MCF 10A (cell line): ENCODE measurements at regions of chr1 and their contacts with region 1.

Region 1: DNA sequence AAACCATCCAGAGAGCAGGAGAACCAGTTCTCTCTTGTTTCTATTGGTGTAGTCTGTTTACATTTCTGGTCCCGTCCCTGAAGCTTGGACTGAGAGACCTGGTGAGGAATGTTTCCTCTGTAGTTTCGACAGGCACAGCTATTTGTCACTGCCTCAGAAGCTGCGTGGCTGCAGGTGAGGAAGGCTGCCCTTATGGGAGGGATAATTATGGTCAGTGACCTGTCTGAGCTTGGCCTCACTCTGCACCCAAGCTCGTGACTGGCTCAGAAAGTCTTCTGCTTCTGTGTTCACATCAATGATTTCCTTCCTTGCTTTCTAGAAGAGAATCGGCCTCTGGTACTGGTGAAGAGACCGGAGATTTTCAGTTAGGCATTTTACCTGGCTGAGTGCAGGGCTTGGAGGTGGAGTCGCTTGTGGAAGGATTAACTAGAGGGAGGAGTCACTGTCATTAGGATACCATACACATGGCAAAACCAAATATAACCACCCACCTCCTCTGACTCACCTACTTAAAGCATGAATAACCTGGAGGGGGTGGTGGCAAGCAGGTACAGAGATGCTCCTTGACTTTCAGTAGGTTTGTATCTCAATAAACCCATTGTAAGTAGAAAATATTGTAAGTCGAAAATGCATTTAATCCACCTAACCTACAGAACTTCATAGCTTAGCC is 19.9 kb upstream of the WDR26 start:
- DNase-seq: peak; percentile 95
- H3K4me3 Mint-ChIP-seq: peak overlapping the region; percentile 46
- H3K27ac Mint-ChIP-seq: peak overlapping the region; percentile 68
- H3K4me1 Mint-ChIP-seq: peaks cover 51% of the 10 kb centered on the region
- H3K27me3 Mint-ChIP-seq: no peaks in the 10 kb centered on the region
- CTCF ChIP-seq: no peak

Region 2: GRCh38 chr1:224113918-224114786 is 340.4 kb before region 1 on chr1 and contains the start of gene FBXO28:
- CTCF ChIA-PET with region 1: interaction called, 23 read pairs
- POLR2A ChIA-PET with region 1: interaction called, 6 read pairs
- intact Hi-C with region 1: loop called (anchors 1 kb)
- DNase-seq: peak; percentile 99
- H3K4me3 Mint-ChIP-seq: peak within 1 kb of the TSS; percentile 90
- H3K27ac Mint-ChIP-seq: peak within 1 kb of the TSS; percentile 82
- H3K4me1 Mint-ChIP-seq: peaks cover 8% of the 10 kb centered on the region
- H3K27me3 Mint-ChIP-seq: no peaks in the 10 kb centered on the region
- CTCF ChIP-seq: no peak
- total RNA-seq, gene FBXO28: 97.6 and 110 TPM in 2 replicates

Region 3: DNA sequence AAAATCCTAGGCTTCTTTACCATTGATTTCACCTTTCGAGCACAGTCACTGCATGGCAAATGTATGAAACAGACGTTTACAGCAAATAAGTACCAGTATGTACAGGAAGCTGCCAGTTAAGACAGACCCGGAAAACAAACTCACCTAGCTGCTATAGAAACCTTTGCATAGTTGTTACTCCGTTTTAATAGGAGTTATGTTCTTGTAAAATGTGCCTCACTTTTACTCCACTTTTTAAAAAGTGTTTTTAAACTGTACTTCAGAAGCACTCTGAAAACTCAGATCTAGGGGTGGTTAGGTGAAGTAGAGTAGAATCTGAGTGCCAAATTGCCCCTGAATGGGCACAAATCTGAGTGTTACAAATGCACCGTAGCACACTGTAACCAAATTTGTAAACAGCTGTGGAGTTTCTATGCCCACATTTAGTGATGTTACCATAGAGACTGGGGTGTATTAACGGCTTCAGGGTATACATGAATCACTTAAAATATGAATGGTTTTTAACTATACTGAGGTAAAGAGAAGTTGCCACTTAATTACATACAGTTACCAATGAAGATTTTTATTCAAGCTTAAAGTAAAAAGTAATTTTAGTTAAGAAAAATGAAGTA is 67.1 kb before region 1 on chr1:
- CTCF ChIA-PET with region 1: interaction called, 41 read pairs
- POLR2A ChIA-PET with region 1: interaction called, 6 read pairs
- intact Hi-C with region 1: loop called (anchors 5 kb)
- DNase-seq: no peak
- H3K4me3 Mint-ChIP-seq: no peak overlapping the region
- H3K27ac Mint-ChIP-seq: no peak overlapping the region
- H3K4me1 Mint-ChIP-seq: no peaks in the 10 kb centered on the region
- H3K27me3 Mint-ChIP-seq: no peaks in the 10 kb centered on the region
- CTCF ChIP-seq: no peak

Region 4: DNA sequence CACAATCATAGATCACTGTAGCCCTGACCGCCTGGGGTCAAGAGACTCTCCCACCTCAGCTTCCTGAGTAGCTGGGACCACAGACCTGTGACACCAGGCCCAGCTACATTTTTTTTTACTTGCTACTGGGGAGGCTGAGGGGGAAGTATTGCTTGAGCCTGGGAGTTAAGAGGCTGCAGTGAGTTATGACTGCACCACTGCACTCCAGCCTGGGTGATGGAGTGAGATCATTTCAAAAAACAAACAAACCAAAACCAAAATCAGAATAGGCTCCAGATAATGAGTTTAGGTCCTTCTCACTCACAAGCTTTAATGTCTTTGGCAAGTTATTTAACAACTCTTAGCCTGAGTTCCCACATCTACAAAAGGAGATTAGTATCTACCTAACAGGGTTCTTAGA is 42.8 kb before region 1 on chr1:
- CTCF ChIA-PET with region 1: interaction called, 41 read pairs
- POLR2A ChIA-PET with region 1: interaction called, 28 read pairs
- intact Hi-C with region 1: loop called (anchors 2 kb)
- DNase-seq: no peak
- H3K4me3 Mint-ChIP-seq: no peak overlapping the region
- H3K27ac Mint-ChIP-seq: peak overlapping the region; percentile 47
- H3K4me1 Mint-ChIP-seq: peaks cover 11% of the 10 kb centered on the region
- H3K27me3 Mint-ChIP-seq: no peaks in the 10 kb centered on the region
- CTCF ChIP-seq: no peak

Region 5: DNA sequence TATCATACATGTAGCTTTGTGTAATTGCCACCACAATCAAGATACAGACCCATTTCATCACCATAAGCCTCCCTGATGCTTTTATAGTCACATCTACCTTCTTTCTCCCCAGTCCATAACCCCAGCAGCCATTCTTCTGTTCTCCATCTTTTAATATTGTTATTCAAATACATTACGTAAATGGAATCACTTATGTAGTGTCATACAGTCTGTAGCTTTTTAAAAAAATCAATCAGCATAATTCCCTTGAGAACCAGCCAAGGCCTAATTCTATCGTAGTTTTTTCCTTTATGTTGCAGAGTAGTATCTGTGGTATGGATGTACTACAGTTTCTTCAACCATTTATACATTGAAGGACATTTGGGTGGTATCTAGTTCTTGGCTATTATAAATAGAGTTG is 11.6 kb after region 1 on chr1:
- CTCF ChIA-PET with region 1: interaction called, 38 read pairs
- POLR2A ChIA-PET with region 1: interaction called, 5 read pairs
- intact Hi-C with region 1: no loop called
- DNase-seq: no peak
- H3K4me3 Mint-ChIP-seq: no peak overlapping the region
- H3K27ac Mint-ChIP-seq: no peak overlapping the region
- H3K4me1 Mint-ChIP-seq: no peaks in the 10 kb centered on the region
- H3K27me3 Mint-ChIP-seq: no peaks in the 10 kb centered on the region
- CTCF ChIP-seq: no peak

Region 6: DNA sequence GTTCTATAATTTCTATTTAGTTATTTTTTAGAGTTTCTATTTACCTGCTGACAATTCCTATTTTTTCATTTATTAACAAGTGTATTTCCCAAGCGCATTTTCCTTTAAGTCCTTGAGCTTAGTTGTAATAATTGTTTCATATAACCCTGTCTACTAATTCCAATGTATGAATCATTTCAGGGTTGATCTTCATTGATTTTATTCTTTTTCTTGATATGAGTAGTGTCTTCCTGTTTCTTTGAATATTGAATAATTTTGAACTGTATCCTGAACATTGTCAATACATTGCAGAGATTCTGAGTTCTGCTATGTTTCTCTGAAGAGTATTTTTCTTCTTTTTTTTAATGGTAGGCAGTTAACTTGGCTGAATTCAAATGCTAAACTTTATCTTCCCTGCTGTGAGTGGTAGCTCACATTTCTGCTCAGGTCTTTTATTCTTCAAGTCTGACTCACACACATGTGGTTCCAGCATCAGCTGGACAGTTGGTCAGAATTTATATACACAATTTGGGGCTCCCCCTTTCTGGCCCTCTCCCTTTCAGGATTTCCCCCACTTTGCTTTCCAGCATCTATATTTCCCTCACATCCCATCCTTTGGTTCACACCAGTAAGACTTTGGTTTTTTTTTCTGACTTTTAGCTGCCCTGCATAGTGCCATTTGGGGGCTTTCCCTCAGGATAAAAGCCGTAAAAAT is 34.4 kb after region 1 on chr1:
- CTCF ChIA-PET with region 1: interaction called, 18 read pairs
- POLR2A ChIA-PET with region 1: interaction called, 6 read pairs
- intact Hi-C with region 1: no loop called
- DNase-seq: peak; percentile 56
- H3K4me3 Mint-ChIP-seq: no peak overlapping the region
- H3K27ac Mint-ChIP-seq: peak overlapping the region; percentile 61
- H3K4me1 Mint-ChIP-seq: peaks cover 28% of the 10 kb centered on the region
- H3K27me3 Mint-ChIP-seq: no peaks in the 10 kb centered on the region
- CTCF ChIP-seq: no peak

Region 7: DNA sequence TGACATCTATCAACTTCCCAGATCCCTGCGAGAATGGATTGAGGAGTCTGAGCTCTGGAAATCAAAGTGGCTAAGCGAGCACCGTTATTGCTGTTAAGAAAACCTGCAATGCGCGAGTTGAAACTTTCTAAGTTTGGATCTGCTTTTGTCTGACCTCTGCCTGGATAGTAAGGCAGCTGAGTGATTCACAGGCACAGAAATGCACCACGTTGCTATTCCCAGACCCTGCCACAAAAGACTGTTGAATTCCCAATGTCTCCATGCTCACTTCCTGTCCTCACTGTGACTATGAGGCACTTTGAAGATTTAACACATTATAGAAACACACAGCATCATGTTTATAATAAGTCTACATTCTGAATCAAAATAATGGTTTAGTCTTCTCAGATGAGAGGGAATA is 134.5 kb after region 1 on chr1:
- CTCF ChIA-PET with region 1: no interaction called
- POLR2A ChIA-PET with region 1: no interaction called
- intact Hi-C with region 1: no loop called
- DNase-seq: no peak
- H3K4me3 Mint-ChIP-seq: no peak overlapping the region
- H3K27ac Mint-ChIP-seq: no peak overlapping the region
- H3K4me1 Mint-ChIP-seq: peaks cover 15% of the 10 kb centered on the region
- H3K27me3 Mint-ChIP-seq: no peaks in the 10 kb centered on the region
- CTCF ChIP-seq: no peak

Region 8: GRCh38 chr1:224783129-224783651 is 328.7 kb after region 1 on chr1:
- CTCF ChIA-PET with region 1: no interaction called
- POLR2A ChIA-PET with region 1: no interaction called
- intact Hi-C with region 1: no loop called
- DNase-seq: no peak
- H3K4me3 Mint-ChIP-seq: no peak overlapping the region
- H3K27ac Mint-ChIP-seq: no peak overlapping the region
- H3K4me1 Mint-ChIP-seq: peaks cover 17% of the 10 kb centered on the region
- H3K27me3 Mint-ChIP-seq: no peaks in the 10 kb centered on the region
- CTCF ChIP-seq: no peak

Region 9: GRCh38 chr1:224863970-224864369 is 409.4 kb after region 1 on chr1:
- CTCF ChIA-PET with region 1: no interaction called
- POLR2A ChIA-PET with region 1: no interaction called
- intact Hi-C with region 1: no loop called
- DNase-seq: no peak
- H3K4me3 Mint-ChIP-seq: no peak overlapping the region
- H3K27ac Mint-ChIP-seq: no peak overlapping the region
- H3K4me1 Mint-ChIP-seq: no peaks in the 10 kb centered on the region
- H3K27me3 Mint-ChIP-seq: peaks cover 11% of the 10 kb centered on the region
- CTCF ChIP-seq: no peak

Region 10: GRCh38 chr1:224922404-224923164 is 468.1 kb after region 1 on chr1:
- CTCF ChIA-PET with region 1: interaction called, 39 read pairs
- POLR2A ChIA-PET with region 1: interaction called, 3 read pairs
- intact Hi-C with region 1: no loop called
- DNase-seq: peak; percentile 76
- H3K4me3 Mint-ChIP-seq: no peak overlapping the region
- H3K27ac Mint-ChIP-seq: no peak overlapping the region
- H3K4me1 Mint-ChIP-seq: peaks cover 4% of the 10 kb centered on the region
- H3K27me3 Mint-ChIP-seq: no peaks in the 10 kb centered on the region
- CTCF ChIP-seq: peak; percentile 99